T-cell (primary cell): ENCODE measurements at regions of chr9 and their contacts with region 1.

Region 1: GRCh38 chr9:12908931-12909608 is 134.2 kb downstream of the LURAP1L start:
- DNase-seq: no peak
- ATAC-seq: no peak
- H3K4me3 ChIP-seq: no peak overlapping the region
- H3K4me3 Mint-ChIP-seq: no peak overlapping the region
- H3K27ac ChIP-seq: no peak overlapping the region
- H3K27ac Mint-ChIP-seq: no peak overlapping the region
- H3K4me1 ChIP-seq: no peaks in the 10 kb centered on the region
- H3K4me1 Mint-ChIP-seq: no peaks in the 10 kb centered on the region
- H3K27me3 ChIP-seq: no peaks in the 10 kb centered on the region
- H3K27me3 Mint-ChIP-seq: no peaks in the 10 kb centered on the region

Region 2: DNA sequence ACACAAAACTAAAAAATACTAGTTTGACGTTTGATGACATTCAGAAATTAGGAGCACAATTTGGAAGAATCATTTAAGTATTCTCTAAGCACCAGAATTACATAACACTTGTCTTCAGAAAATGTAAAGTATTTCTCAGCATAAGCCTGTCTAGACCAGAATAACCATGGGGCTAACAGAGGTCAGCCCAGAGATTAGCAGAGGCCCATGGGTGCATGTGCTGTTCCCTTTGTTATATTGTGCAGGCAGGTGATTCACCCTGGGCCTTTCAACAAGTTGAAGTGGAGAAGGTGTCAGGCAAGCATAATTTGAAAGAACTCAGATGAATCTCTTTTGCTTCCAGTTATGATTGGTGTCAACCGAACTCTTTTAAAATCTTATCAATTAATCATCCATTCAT is 93.7 kb after region 1 on chr9:
- CTCF ChIA-PET with region 1: no interaction called
- POLR2A ChIA-PET with region 1: no interaction called
- DNase-seq: no peak
- ATAC-seq: no peak
- H3K4me3 ChIP-seq: no peak overlapping the region
- H3K4me3 Mint-ChIP-seq: no peak overlapping the region
- H3K27ac ChIP-seq: no peak overlapping the region
- H3K27ac Mint-ChIP-seq: no peak overlapping the region
- H3K4me1 ChIP-seq: no peaks in the 10 kb centered on the region
- H3K4me1 Mint-ChIP-seq: no peaks in the 10 kb centered on the region
- H3K27me3 ChIP-seq: no peaks in the 10 kb centered on the region
- H3K27me3 Mint-ChIP-seq: no peaks in the 10 kb centered on the region

Region 3: GRCh38 chr9:13049223-13049622 is 140.2 kb after region 1 on chr9:
- CTCF ChIA-PET with region 1: no interaction called
- POLR2A ChIA-PET with region 1: no interaction called
- DNase-seq: no peak
- ATAC-seq: no peak
- H3K4me3 ChIP-seq: no peak overlapping the region
- H3K4me3 Mint-ChIP-seq: no peak overlapping the region
- H3K27ac ChIP-seq: no peak overlapping the region
- H3K27ac Mint-ChIP-seq: no peak overlapping the region
- H3K4me1 ChIP-seq: no peaks in the 10 kb centered on the region
- H3K4me1 Mint-ChIP-seq: no peaks in the 10 kb centered on the region
- H3K27me3 ChIP-seq: no peaks in the 10 kb centered on the region
- H3K27me3 Mint-ChIP-seq: no peaks in the 10 kb centered on the region

Region 4: GRCh38 chr9:13823026-13823425 is 914.0 kb after region 1 on chr9:
- CTCF ChIA-PET with region 1: no interaction called
- POLR2A ChIA-PET with region 1: interaction called in 1 of 2 experiments, 10 read pairs
- DNase-seq: no peak
- ATAC-seq: no peak
- H3K4me3 ChIP-seq: no peak overlapping the region
- H3K4me3 Mint-ChIP-seq: no peak overlapping the region
- H3K27ac ChIP-seq: no peak overlapping the region
- H3K27ac Mint-ChIP-seq: no peak overlapping the region
- H3K4me1 ChIP-seq: no peaks in the 10 kb centered on the region
- H3K4me1 Mint-ChIP-seq: no peaks in the 10 kb centered on the region
- H3K27me3 ChIP-seq: no peaks in the 10 kb centered on the region
- H3K27me3 Mint-ChIP-seq: no peaks in the 10 kb centered on the region